ENCODE measurements at regions of chr2 and their contacts with region 1.

Region 1: GRCh38 chr2:106104332-106105062 is 89.6 kb downstream of the UXS1 start:
- DNase-seq: peak in 4 of 5 donors; percentile 42 to 63 (median 54)
- H3K4me3 ChIP-seq: no peak overlapping the region
- H3K27ac ChIP-seq: no peak overlapping the region
- H3K4me1 ChIP-seq: peaks cover 5% of the 10 kb centered on the region
- H3K27me3 ChIP-seq: no peaks in the 10 kb centered on the region
- CTCF ChIP-seq: peak; percentile 54 to 80 (median 75)
- EP300 ChIP-seq: no peak
- POLR2A ChIP-seq: no peak

Region 2: GRCh38 chr2:105671156-105671555 is 433.3 kb before region 1 on chr2:
- intact Hi-C with region 1: no loop called
- DNase-seq: peak in 2 of 5 donors; percentile 25 to 40
- H3K4me3 ChIP-seq: no peak overlapping the region
- H3K27ac ChIP-seq: no peak overlapping the region
- H3K4me1 ChIP-seq: no peaks in the 10 kb centered on the region
- H3K27me3 ChIP-seq: no peaks in the 10 kb centered on the region
- CTCF ChIP-seq: no peak
- EP300 ChIP-seq: no peak
- POLR2A ChIP-seq: no peak

Region 3: GRCh38 chr2:105888625-105889400 is 215.7 kb before region 1 on chr2:
- intact Hi-C with region 1: no loop called
- DNase-seq: no peak
- H3K4me3 ChIP-seq: no peak overlapping the region
- H3K27ac ChIP-seq: no peak overlapping the region
- H3K4me1 ChIP-seq: peaks cover 6% of the 10 kb centered on the region
- H3K27me3 ChIP-seq: no peaks in the 10 kb centered on the region
- CTCF ChIP-seq: no peak
- EP300 ChIP-seq: no peak
- POLR2A ChIP-seq: no peak

Region 4: GRCh38 chr2:106542811-106543259 is 438.3 kb after region 1 on chr2:
- intact Hi-C with region 1: loop called in 3 of 4 experiments (anchors 5 to 10 kb)
- DNase-seq: peak; percentile 33 to 77 (median 64)
- H3K4me3 ChIP-seq: no peak overlapping the region
- H3K27ac ChIP-seq: no peak overlapping the region
- H3K4me1 ChIP-seq: no peaks in the 10 kb centered on the region
- H3K27me3 ChIP-seq: no peaks in the 10 kb centered on the region
- CTCF ChIP-seq: peak; percentile 34 to 62 (median 58)
- EP300 ChIP-seq: no peak
- POLR2A ChIP-seq: no peak